K562 (cell line): ENCODE measurements at regions of chr9 and their contacts with region 1.

Region 1: GRCh38 chr9:113221003-113221799 is at the starts of genes FKBP15 and SLC31A1:
- DNase-seq: peak; percentile 98 to 99 (median 99)
- ATAC-seq: peak; percentile 94
- H3K4me3 ChIP-seq: peak within 1 kb of the TSS; percentile 76
- H3K27ac ChIP-seq: peak within 1 kb of the TSS; percentile 71
- H3K4me1 ChIP-seq: peaks cover 6 to 24% of the 10 kb centered on the region in 2 experiments; a peak in 3 of 5 replicates
- H3K27me3 ChIP-seq: no peaks in the 10 kb centered on the region
- CTCF ChIP-seq: no peak
- EP300 ChIP-seq: peak; percentile 22; the same call in 1 of the 2 replicates
- POLR2A ChIP-seq: peak; percentile 81
- RAD21 ChIP-seq: no peak
- polyA plus RNA-seq, gene FKBP15: 8.7 to 15.3 TPM
- polyA plus RNA-seq, gene SLC31A1: 21.7 to 30.7 TPM

Region 2: GRCh38 chr9:113231701-113232100 is 10.5 kb after region 1 on chr9:
- CTCF ChIA-PET with region 1: no interaction called
- POLR2A ChIA-PET with region 1: interaction called, 18 read pairs
- in situ Hi-C with region 1: no loop called
- intact Hi-C with region 1: no loop called
- DNase-seq: peak; percentile 20 to 41 (median 32)
- ATAC-seq: peak; percentile 65
- H3K4me3 ChIP-seq: no peak overlapping the region
- H3K27ac ChIP-seq: peak overlapping the region; percentile 15; the same call in 2 of the 3 replicates
- H3K4me1 ChIP-seq: peaks cover 0 to 30% of the 10 kb centered on the region in 2 experiments; a peak in 3 of 5 replicates
- H3K27me3 ChIP-seq: no peaks in the 10 kb centered on the region
- CTCF ChIP-seq: no peak
- EP300 ChIP-seq: 0 out of 2 replicates have a peak, but pooled peaks have one; percentile 15
- POLR2A ChIP-seq: no peak
- RAD21 ChIP-seq: no peak

Region 3: DNA sequence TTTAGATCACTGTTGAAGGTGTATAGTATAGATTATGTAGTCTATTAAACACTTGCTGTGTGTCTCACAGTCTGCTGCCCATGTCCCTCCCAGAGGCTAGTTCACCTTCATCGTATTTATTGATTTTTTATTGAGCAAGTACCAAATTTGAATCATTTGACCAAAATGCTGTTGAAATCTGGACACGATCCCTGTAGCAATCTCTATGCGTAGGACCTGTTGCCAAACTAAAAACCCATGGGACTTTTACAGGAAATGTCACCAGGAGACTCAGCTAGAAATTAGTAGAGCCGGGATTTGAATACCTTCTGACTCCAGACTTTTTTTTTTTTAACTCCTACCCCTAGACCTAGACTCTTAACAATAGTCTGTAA is 17.6 kb after region 1 on chr9:
- CTCF ChIA-PET with region 1: no interaction called
- POLR2A ChIA-PET with region 1: interaction called, 23 read pairs
- in situ Hi-C with region 1: no loop called
- intact Hi-C with region 1: no loop called
- DNase-seq: no peak
- ATAC-seq: no peak
- H3K4me3 ChIP-seq: no peak overlapping the region
- H3K27ac ChIP-seq: no peak overlapping the region
- H3K4me1 ChIP-seq: peaks cover 3% of the 10 kb centered on the region in 2 experiments; a peak in 2 of 5 replicates
- H3K27me3 ChIP-seq: no peaks in the 10 kb centered on the region
- CTCF ChIP-seq: no peak
- EP300 ChIP-seq: no peak
- POLR2A ChIP-seq: no peak
- RAD21 ChIP-seq: no peak

Region 4: GRCh38 chr9:113380869-113381378 is 159.7 kb after region 1 on chr9:
- CTCF ChIA-PET with region 1: no interaction called
- POLR2A ChIA-PET with region 1: no interaction called
- in situ Hi-C with region 1: no loop called
- intact Hi-C with region 1: no loop called
- DNase-seq: no peak
- ATAC-seq: no peak
- H3K4me3 ChIP-seq: no peak overlapping the region
- H3K27ac ChIP-seq: no peak overlapping the region
- H3K4me1 ChIP-seq: peaks cover 19% of the 10 kb centered on the region in 2 experiments; a peak in 4 of 5 replicates
- H3K27me3 ChIP-seq: no peaks in the 10 kb centered on the region
- CTCF ChIP-seq: no peak
- EP300 ChIP-seq: no peak
- POLR2A ChIP-seq: no peak
- RAD21 ChIP-seq: no peak